Naive thymus-derived CD8-positive, alpha-beta T cell (primary cell): ENCODE measurements at regions of chr5 and their contacts with region 1.

Region 1: GRCh38 chr5:43040287-43041098 is at the start of gene ANXA2R:
- DNase-seq: peak; percentile 78 to 98 (median 95)
- ATAC-seq: peak; percentile 51 to 56
- H3K4me3 Mint-ChIP-seq: peak within 1 kb of the TSS; percentile 95 to 100 (median 98)
- H3K27ac Mint-ChIP-seq: peak within 1 kb of the TSS; percentile 96 to 100 (median 99)
- H3K4me1 Mint-ChIP-seq: peaks cover 19 to 61% (median 52%) of the 10 kb centered on the region in 4 donors
- H3K27me3 Mint-ChIP-seq: no peaks in the 10 kb centered on the region
- polyA plus RNA-seq, gene ANXA2R: 51.5 to 69.8 (median 54.8) TPM

Region 2: DNA sequence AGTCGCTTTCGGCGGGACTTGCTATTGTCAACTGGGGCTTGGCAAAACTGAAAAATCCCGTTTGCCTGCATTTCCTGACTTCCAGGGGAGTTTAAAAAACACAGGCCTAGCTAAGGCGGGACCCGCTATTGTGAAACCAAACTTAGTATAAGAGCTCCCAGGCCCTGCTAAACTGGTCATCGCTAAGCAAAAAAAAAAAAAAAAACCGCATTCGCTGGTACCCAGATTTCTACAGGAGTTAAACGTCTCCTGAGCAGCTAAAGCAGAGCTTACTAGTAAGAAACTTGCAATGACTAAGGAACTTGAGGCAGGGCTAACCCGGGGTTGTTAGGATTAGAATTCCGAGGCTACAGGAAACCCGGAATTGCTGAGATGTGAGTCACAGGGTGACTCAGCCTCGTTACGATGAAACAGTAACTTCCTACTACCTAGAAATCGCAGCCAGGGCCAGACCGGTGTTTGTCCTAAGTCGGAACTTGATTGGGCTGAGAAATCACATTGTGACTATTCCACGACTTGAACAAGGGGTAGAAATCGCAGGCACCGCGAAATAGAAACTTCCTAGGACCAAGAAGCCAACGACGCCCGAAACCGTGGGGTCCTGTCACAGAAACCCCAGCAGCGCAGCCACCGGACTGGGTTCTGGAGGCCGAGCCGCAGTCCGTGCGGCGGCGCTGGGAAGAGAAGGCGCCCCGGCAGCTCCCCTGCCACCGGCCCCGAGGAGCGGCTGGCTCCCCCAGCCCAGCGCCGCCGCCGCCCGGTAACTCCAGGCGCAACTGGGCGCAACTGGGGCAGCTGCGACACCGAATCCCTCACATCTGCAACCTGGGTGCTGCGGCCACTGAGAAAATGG is 89.8 kb before region 1 on chr5:
- POLR2A ChIA-PET with region 1: interaction called, 199 read pairs
- DNase-seq: peak in 8 of 10 donors; percentile 27 to 72 (median 54)
- ATAC-seq: peak; percentile 8 to 37
- H3K4me3 Mint-ChIP-seq: peak overlapping the region; percentile 91 to 99 (median 96)
- H3K27ac Mint-ChIP-seq: peak overlapping the region; percentile 99 to 100 (median 100)
- H3K4me1 Mint-ChIP-seq: peaks cover 13 to 36% (median 26%) of the 10 kb centered on the region in 4 donors
- H3K27me3 Mint-ChIP-seq: no peaks in the 10 kb centered on the region

Region 3: GRCh38 chr5:43008369-43009153 is 31.9 kb before region 1 on chr5:
- POLR2A ChIA-PET with region 1: interaction called, 431 read pairs
- DNase-seq: peak; percentile 80 to 96 (median 91)
- ATAC-seq: peak; percentile 63 to 71
- H3K4me3 Mint-ChIP-seq: peak overlapping the region; percentile 83 to 99 (median 94)
- H3K27ac Mint-ChIP-seq: peak overlapping the region; percentile 92 to 100 (median 99)
- H3K4me1 Mint-ChIP-seq: peaks cover 17 to 40% (median 28%) of the 10 kb centered on the region in 4 donors
- H3K27me3 Mint-ChIP-seq: no peaks in the 10 kb centered on the region

Region 4: DNA sequence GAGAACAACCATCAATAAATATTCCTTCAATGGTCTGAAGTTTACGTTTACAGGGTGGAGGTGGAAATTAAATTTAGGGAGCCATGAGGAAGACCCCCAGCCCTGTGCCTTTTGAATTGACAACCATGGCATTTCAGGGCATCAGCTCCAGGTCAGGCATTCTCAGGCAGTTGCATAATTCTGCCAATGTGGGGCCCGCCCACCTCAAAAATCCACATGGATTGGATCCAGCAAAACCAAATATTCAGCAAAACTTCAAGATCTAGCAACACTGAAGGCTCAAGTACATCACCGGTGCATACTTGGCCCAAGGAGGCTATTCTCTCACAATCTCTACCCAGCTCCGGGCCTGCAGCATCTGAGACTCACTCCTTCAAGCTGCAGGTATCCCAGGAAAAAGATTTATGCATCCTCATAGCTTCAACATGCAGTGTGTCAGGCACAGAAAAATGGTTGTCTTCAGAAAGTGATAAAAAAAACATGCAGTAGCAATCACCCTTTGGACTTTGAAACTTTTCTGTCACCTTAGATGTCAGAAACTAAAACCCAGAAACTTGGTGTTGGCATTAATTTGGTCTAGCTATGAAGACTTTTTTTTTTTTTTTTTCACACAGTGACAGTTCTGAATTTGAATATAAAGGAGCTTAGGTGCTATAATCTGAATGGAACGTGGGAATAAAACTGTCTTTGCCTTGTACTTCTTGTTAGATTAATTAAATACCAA is 21.0 kb after region 1 on chr5:
- POLR2A ChIA-PET with region 1: interaction called, 619 read pairs
- DNase-seq: peak in 1 of 10 donors; percentile 31
- ATAC-seq: no peak
- H3K4me3 Mint-ChIP-seq: no peak overlapping the region
- H3K27ac Mint-ChIP-seq: peak overlapping the region; percentile 53 to 87 (median 77)
- H3K4me1 Mint-ChIP-seq: peaks cover 6 to 28% (median 18%) of the 10 kb centered on the region in 4 donors
- H3K27me3 Mint-ChIP-seq: no peaks in the 10 kb centered on the region

Region 5: DNA sequence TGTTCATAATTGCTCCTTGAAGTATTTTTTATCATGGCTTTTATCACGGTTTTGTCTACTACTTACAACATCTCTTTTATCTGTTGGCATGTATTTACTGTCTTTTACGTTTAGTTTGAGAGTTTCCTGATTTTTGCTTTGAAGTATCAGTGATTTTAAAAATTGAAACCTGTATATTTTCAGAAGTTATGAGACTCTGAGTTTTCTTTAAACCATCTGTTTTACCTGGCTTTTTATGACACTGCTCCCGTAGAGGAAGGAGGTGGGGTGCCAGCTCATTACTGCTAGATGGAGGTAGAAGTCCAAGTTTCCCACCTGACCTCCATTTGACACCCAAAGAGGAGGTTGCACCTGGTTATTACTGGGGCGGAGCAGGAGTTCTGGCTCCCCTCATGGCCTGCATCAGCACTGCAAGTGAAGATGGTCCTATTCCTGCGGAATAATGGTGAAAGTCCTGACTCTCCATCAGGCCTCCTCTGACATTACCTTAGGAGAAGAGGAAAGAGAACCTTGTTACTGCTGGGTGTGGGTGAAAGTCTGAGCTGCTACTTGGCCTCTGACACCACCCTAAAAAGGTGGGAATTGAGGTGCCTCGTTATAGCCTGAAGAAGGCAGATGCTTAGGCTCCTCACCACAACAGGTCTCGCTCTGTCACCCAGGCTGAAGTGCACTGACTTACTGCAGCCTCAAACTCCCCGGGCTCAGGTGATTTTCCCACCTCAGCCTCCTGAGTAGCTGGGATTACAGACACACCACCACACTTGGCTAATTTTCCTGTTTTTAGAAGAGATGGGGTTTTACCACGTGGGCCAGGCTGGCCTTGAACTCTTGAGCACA is 70.3 kb after region 1 on chr5:
- POLR2A ChIA-PET with region 1: interaction called, 25 read pairs
- DNase-seq: peak in 7 of 10 donors; percentile 19 to 64 (median 34)
- ATAC-seq: peak; percentile 80 to 85
- H3K4me3 Mint-ChIP-seq: peak overlapping the region; percentile 50 to 80 (median 62)
- H3K27ac Mint-ChIP-seq: peak overlapping the region; percentile 83 to 95 (median 88)
- H3K4me1 Mint-ChIP-seq: peaks cover 11 to 34% (median 28%) of the 10 kb centered on the region in 4 donors
- H3K27me3 Mint-ChIP-seq: no peaks in the 10 kb centered on the region

Region 6: DNA sequence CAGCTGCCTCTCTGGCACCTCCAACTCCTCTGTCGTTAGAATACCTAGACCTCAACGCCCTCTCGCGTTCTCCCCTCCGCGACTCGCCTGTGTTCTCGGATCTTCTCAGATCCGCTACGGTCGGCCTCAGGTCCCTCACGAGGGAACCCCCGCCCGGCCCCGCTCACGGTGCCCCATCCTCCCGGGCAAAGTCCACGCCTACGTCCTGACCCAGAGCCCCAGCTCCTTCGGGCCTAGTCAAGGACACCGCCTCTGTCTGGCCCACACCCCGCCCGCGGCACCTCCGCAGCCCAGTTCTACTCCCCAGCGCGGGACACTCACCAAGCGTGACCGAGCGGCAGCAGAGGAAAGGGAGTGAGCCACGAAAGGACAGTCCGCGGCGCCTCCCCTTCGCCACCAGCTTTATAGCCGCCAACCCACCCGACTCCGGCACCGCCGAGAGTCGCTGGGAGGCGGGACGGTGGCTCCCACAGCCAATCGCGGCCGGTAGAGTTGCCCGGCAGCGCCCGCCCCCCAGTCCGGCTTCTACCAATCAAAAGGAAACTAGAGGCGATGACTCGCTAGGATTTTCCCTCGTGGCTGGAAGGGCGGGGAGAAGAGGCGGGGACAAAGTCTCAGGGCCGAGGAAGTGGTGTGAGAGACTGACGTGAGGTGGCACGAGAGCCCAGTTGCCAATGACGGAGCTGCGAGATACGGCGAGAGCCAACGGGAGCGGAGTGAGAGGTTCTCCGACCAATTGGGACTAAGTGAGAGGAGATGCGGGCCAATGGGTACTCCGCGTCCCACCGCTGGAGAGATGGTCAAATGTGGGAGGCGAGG is 272.8 kb after region 1 on chr5 and contains the start of gene HMGCS1:
- POLR2A ChIA-PET with region 1: interaction called, 23 read pairs
- DNase-seq: peak; percentile 94 to 100 (median 99)
- ATAC-seq: peak; percentile 90 to 92
- H3K4me3 Mint-ChIP-seq: peak within 1 kb of the TSS; percentile 90 to 99 (median 97)
- H3K27ac Mint-ChIP-seq: peak within 1 kb of the TSS; percentile 90 to 99 (median 96)
- H3K4me1 Mint-ChIP-seq: peaks cover 22 to 40% (median 34%) of the 10 kb centered on the region in 4 donors
- H3K27me3 Mint-ChIP-seq: peaks cover 0 to 2% (median 0%) of the 10 kb centered on the region in 5 donors
- polyA plus RNA-seq, gene HMGCS1: 4.0 to 11.6 (median 4.2) TPM